OCI-LY7 (cell line): ENCODE measurements at regions of chr3 and their contacts with region 1.

Region 1: DNA sequence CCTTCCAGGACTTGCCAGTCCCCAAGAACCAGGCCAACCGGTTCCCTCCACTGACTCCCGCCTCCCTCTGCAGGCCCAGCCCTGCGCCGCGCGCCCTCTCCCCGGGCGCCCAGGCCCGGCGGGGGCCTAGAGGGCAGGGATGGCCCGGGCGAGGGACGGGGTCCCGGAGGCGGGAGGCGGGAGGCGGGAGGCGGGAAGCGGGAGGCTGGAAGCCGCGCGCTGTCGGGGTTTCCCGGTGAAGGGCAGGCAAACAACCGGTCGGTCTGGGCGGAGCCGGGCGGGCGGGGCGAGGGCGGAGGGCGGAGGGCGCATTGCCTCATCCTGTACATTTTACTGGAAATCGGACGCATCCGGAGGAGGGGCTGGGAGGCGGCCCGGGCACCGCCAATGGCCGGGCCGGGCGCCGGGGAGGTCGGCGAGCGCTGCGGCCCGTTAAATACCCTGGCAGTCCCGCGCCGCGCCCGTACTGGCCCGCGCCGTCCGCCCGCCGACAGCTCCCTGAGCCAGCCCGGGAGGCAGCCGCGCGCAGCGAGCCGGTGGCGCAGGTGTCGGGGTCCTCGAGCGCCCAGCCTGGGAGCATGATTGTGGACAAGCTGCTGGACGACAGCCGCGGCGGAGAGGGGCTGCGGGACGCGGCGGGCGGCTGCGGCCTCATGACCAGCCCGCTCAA is at the start of gene NFKBIZ:
- DNase-seq: peak; percentile 90
- H3K4me3 ChIP-seq: peak within 1 kb of the TSS; percentile 85
- H3K27ac ChIP-seq: peak within 1 kb of the TSS; percentile 60
- H3K4me1 ChIP-seq: peaks cover 36% of the 10 kb centered on the region
- CTCF ChIP-seq: no peak
- total RNA-seq, gene NFKBIZ: 11.8 and 14.1 TPM in 2 replicates

Region 2: DNA sequence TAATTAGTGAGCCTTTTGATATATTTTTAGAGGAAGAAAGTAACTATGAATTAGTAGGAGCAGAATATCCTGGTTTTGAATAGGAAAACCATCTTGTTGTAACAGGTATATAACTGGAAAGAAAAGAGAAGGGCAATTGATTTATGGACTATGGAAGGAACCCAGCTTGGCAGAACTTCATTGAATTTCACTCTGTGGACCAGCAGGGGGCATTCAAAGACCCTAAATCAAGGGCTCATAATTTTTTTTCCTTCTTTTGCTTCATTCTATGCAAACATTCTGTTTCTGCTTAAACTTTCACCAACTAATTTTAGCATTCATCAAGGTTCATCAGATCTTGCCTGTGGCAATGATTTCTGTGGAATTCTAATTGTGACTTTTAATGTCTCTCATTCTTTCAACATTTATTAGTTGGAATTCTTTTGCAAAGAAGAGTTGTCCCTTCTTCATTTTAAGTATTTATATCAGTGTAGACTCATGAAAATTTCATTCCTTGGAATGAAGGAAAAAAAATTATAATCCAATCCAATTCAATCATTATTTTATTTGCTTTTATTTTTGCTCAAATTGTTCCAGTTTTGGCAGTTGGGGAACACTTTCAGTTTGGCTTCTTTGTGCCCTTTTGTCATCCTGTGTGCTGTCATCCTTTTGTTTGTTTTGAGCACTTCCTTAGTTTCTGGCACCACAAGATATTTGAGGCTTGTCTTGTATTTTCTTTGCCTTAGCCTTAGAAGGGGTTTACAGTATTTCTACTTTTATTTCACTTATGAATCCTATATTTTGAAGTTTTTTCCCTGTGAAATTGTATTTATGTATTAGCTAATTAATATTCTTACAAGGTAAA is 39.8 kb before region 1 on chr3:
- CTCF ChIA-PET with region 1: no interaction called
- POLR2A ChIA-PET with region 1: interaction called, 6 read pairs
- intact Hi-C with region 1: loop called (anchors 2 kb)
- DNase-seq: peak; percentile 65
- H3K4me3 ChIP-seq: no peak overlapping the region
- H3K27ac ChIP-seq: no peak overlapping the region
- H3K4me1 ChIP-seq: peaks cover 20% of the 10 kb centered on the region
- CTCF ChIP-seq: peak; percentile 94

Region 3: DNA sequence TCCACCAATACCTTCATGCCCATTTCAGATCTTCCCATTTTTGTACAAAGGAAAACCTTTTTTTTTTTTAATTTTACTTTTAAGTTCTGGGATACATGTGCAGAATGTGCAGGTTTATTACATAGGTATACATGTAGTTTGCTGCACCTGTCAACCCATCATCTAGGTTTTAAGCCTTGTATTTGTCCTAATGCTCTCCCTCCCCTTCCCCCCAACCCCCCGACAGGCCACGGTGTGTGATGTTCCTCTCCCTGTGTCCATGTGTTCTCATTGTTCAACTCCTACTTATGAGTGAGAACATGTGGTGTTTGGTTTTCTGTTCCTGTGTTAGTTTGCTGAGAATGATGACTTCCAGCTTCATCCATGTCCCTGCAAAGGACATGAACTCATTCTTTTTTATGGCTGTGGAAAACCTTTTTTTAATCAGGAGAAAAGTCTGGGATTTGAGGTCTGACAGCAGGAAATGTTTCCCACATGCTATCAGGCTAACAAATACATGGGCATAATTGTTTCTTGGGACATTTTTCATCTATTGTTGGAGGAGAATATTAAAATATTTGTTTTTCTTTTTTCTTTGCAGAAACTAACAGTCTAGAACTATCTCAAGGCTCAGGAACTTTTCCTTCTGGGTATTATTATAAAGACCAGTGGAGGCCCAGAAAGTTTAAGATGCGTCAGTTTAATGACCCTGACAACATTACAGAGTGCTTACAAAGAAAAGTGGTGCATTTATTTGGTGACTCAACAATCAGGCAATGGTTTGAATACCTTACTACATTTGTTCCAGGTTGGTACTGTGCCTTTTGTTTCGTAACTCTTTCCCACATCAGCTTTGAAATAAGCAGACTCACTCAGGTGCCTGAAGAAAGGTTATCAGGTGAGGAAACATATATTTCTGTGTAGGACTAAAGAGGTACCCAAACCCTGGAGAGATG is 32.7 kb before region 1 on chr3:
- CTCF ChIA-PET with region 1: no interaction called
- POLR2A ChIA-PET with region 1: interaction called, 13 read pairs
- intact Hi-C with region 1: loop called (anchors 2 kb)
- DNase-seq: no peak
- H3K4me3 ChIP-seq: no peak overlapping the region
- H3K27ac ChIP-seq: no peak overlapping the region
- H3K4me1 ChIP-seq: peaks cover 36% of the 10 kb centered on the region
- CTCF ChIP-seq: no peak

Region 4: DNA sequence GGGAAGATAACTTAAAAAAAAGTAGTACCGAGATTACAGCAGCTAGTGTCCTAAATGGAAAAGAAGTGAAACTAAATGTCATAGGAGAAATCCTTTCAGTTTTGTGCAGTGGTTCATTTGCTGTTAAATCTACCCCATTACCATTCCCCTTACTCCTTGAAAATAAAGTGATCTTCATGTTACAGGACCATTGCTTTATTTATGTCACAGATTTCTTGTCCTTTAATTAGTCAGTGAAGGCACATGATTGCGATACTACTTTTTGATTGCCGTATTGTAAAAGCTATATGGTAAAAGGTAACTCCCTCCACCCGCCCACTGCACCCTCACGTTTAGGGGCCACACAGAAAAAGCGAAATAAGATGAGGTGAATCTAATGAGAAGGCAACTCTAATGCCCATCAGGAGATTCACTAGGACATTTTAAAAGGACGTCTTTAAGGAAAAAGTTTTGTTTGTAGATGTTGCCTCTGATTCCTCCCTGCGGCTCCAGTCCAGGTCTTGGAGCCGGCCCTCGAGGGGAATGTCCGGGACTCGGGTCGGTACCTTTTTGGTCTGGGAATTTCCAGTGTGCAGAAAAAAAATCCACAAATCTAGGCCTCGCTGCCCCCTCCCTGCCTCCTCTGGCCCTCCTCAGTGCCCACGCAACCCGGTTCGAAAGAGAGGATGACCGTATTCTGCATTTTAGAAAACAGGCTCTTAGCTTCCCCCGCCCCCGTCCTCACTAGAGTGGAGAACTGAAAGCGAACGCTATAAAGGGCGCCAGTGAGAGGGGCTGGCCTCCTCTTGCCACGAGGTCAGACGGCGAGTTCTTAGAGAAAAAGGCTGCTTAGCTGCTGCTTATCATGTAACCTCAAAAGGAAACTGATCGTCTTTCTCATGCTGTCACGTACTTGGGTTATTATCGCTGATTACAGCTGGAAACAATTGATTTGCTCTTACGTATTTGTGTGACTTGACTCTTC is 21.7 kb before region 1 on chr3:
- CTCF ChIA-PET with region 1: interaction called, 3 read pairs
- POLR2A ChIA-PET with region 1: interaction called, 13 read pairs
- intact Hi-C with region 1: loop called (anchors 1 kb)
- DNase-seq: peak; percentile 92
- H3K4me3 ChIP-seq: peak overlapping the region; percentile 71
- H3K27ac ChIP-seq: peak overlapping the region; percentile 68
- H3K4me1 ChIP-seq: peaks cover 38% of the 10 kb centered on the region
- CTCF ChIP-seq: no peak

Region 5: GRCh38 chr3:101898752-101899169 is 49.6 kb after region 1 on chr3:
- CTCF ChIA-PET with region 1: no interaction called
- POLR2A ChIA-PET with region 1: interaction called, 11 read pairs
- intact Hi-C with region 1: loop called (anchors 1 kb)
- DNase-seq: peak; percentile 91
- H3K4me3 ChIP-seq: peak overlapping the region; percentile 59
- H3K27ac ChIP-seq: peak overlapping the region; percentile 98
- H3K4me1 ChIP-seq: peaks cover 62% of the 10 kb centered on the region
- CTCF ChIP-seq: no peak

Region 6: DNA sequence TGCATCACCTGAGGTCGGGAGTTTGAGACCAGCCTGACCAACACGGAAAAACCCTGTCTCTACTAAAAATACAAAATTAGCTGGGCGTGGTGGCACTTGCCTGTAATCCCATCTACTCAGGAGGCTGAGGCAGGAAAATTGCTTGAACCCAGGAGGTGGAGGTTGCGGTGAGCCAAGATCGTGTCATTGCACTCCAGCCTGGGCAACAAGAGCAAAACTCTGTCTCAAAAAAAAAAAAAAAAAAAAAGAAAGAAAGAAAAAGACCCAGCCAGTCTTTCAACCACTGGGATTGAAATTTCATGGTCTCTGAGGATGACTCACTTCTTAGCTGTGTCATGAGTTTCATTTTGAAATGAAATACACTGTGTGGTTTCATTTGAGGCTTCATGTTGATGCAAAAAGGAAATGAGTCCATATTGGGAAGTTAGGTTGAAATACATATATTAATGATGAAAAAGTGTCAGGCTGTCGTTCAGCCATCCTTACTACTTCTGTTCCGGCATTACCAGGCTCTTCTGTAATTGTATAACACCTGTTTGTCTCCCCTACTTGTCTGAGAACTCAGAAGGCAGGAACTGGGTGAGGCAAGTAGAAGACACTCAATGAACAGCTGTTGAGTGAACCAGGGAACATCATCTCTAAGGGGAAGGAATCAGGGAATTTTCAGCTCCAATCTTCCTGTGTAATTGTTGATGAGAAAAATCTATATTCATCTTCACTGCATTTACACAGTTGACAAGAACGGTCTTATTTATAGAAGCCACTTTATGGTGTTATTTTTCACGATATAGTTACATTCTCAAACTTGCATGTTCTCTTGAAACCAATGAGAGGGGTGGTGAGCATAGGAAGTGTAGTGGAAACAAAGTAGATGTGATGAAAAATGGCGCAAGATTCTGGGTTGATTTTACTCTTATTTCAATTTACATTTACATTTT is 87.5 kb after region 1 on chr3:
- CTCF ChIA-PET with region 1: no interaction called
- POLR2A ChIA-PET with region 1: interaction called, 5 read pairs
- intact Hi-C with region 1: loop called (anchors 2 kb)
- DNase-seq: peak; percentile 70
- H3K4me3 ChIP-seq: peak overlapping the region; percentile 34
- H3K27ac ChIP-seq: peak overlapping the region; percentile 61
- H3K4me1 ChIP-seq: peaks cover 72% of the 10 kb centered on the region
- CTCF ChIP-seq: no peak

Region 7: DNA sequence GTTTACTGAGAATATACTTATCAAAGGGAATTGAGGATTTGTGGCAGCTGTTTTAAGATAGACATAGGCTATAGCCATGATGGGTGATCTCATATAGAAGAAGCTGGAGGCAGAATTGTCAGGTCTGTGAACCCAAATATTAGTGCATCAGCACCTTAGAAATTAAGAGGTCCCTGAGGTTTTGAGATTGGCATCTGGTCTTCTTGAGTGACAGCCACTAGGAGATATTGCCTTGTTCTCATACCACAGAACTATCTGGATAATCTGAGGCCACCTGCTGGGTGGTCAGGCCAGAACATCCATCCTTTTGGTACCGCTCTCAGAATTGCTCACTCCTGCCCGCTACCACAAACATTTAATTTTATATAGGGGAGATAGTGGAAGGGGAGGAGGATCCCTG is 374.9 kb after region 1 on chr3:
- CTCF ChIA-PET with region 1: interaction called, 3 read pairs
- POLR2A ChIA-PET with region 1: interaction called, 5 read pairs
- intact Hi-C with region 1: loop called (anchors 1 kb)
- DNase-seq: peak; percentile 54
- H3K4me3 ChIP-seq: no peak overlapping the region
- H3K27ac ChIP-seq: no peak overlapping the region
- H3K4me1 ChIP-seq: peaks cover under 1% of the 10 kb centered on the region
- CTCF ChIP-seq: peak; percentile 72